MCF 10A (cell line): ENCODE measurements at regions of chr1 and their contacts with region 1.

Region 1: GRCh38 chr1:245045087-245045881 is 109.5 kb upstream of the KIF26B start:
- DNase-seq: peak; percentile 31
- H3K4me3 Mint-ChIP-seq: no peak overlapping the region
- H3K27ac Mint-ChIP-seq: no peak overlapping the region
- H3K4me1 Mint-ChIP-seq: peaks cover 17% of the 10 kb centered on the region
- H3K27me3 Mint-ChIP-seq: no peaks in the 10 kb centered on the region
- CTCF ChIP-seq: no peak

Region 2: DNA sequence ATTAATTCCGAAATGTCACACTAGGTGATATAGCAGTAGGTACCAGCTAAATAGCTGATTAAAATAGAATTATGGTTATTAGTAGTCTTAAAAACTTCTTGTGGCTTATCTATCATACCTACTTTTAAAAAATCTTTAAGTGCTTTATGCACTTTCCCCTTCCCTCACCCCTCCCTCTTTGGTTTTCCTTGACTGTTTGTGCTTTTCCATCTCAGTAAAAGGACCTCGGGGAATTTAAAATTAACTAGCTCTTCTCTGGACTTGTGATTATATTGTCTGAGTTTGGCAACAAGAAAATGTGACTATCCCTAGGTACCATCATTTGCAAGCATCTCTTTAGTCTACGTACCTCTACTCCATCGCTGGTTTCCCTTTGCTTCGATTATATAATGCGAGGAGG is 198.6 kb before region 1 on chr1:
- CTCF ChIA-PET with region 1: interaction called, 40 read pairs
- POLR2A ChIA-PET with region 1: interaction called, 9 read pairs
- intact Hi-C with region 1: no loop called
- DNase-seq: no peak
- H3K4me3 Mint-ChIP-seq: no peak overlapping the region
- H3K27ac Mint-ChIP-seq: no peak overlapping the region
- H3K4me1 Mint-ChIP-seq: no peaks in the 10 kb centered on the region
- H3K27me3 Mint-ChIP-seq: no peaks in the 10 kb centered on the region
- CTCF ChIP-seq: no peak

Region 3: GRCh38 chr1:244874974-244875579 is 170.2 kb before region 1 on chr1:
- CTCF ChIA-PET with region 1: interaction called, 17 read pairs
- POLR2A ChIA-PET with region 1: no interaction called
- intact Hi-C with region 1: no loop called
- DNase-seq: no peak
- H3K4me3 Mint-ChIP-seq: no peak overlapping the region
- H3K27ac Mint-ChIP-seq: no peak overlapping the region
- H3K4me1 Mint-ChIP-seq: peaks cover 9% of the 10 kb centered on the region
- H3K27me3 Mint-ChIP-seq: no peaks in the 10 kb centered on the region
- CTCF ChIP-seq: no peak

Region 4: DNA sequence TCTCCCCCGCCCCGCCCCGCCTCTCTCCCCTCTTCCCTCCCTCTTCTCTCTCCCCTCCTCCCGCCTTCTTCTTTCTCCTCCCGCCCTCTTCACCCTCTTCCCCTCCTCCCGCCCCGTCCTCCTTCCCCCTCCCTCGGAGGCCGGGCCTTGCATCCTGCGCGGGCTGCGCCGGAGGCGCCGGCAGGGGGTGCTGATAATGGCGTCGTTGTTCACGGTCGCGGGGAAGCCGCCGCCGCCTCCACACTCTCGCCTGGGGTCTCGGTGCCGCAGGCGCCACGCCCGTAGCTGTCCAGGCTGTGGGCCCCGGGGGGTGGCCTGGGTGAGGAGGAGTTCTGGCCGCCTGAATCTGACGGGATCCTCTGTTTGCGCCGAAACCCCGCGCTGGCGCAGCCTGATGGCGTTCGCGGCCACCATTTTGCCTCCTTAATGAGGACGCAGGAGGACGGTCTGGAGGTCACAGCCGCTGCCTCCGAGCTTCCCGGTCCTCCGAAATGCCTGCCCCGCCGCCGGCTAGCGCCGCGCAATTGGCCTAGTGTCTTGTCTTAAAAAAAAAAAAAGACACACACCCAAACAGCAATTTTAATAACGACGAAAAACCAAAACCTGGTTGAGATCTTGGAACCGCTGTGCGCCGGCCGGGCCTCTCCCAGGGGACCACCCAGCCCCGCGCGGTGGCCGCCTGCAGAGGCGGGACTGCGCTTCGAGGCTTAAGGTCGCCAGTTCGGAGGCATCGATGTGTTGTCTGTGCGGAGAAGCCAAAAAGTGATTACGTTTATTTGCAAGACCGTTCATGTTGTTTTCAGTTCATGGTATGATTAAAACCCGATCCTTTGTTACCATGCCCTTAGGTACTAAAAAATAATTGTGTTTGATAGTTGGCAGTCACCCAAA is 74.4 kb before region 1 on chr1:
- CTCF ChIA-PET with region 1: interaction called, 35 read pairs
- POLR2A ChIA-PET with region 1: interaction called, 33 read pairs
- intact Hi-C with region 1: loop called (anchors 1 kb)
- DNase-seq: peak; percentile 100
- H3K4me3 Mint-ChIP-seq: peak overlapping the region; percentile 98
- H3K27ac Mint-ChIP-seq: peak overlapping the region; percentile 100
- H3K4me1 Mint-ChIP-seq: peaks cover 29% of the 10 kb centered on the region
- H3K27me3 Mint-ChIP-seq: no peaks in the 10 kb centered on the region
- CTCF ChIP-seq: peak; percentile 85

Region 5: DNA sequence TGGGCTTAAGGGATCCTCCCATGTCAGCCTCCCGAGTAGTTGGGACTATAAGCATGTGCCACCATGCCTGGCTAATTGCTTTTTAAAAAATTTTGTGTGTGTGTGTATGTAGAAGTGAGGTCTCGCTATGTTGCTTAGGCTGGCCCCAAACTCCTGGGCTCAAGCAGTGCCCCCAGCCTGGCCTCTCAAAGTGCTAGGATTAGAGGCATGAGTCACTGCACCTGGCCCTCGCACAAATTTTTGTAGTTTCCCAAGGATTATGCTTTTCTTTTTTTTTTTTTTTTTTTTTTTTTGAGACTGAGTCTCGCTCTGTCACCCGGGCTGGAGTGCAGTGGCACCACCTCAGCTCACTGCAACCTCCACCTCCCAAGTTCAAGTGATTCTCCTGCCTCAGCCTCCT is 36.5 kb before region 1 on chr1:
- CTCF ChIA-PET with region 1: interaction called, 10 read pairs
- POLR2A ChIA-PET with region 1: no interaction called
- intact Hi-C with region 1: no loop called
- DNase-seq: peak; percentile 64
- H3K4me3 Mint-ChIP-seq: no peak overlapping the region
- H3K27ac Mint-ChIP-seq: no peak overlapping the region
- H3K4me1 Mint-ChIP-seq: no peaks in the 10 kb centered on the region
- H3K27me3 Mint-ChIP-seq: no peaks in the 10 kb centered on the region
- CTCF ChIP-seq: no peak

Region 6: DNA sequence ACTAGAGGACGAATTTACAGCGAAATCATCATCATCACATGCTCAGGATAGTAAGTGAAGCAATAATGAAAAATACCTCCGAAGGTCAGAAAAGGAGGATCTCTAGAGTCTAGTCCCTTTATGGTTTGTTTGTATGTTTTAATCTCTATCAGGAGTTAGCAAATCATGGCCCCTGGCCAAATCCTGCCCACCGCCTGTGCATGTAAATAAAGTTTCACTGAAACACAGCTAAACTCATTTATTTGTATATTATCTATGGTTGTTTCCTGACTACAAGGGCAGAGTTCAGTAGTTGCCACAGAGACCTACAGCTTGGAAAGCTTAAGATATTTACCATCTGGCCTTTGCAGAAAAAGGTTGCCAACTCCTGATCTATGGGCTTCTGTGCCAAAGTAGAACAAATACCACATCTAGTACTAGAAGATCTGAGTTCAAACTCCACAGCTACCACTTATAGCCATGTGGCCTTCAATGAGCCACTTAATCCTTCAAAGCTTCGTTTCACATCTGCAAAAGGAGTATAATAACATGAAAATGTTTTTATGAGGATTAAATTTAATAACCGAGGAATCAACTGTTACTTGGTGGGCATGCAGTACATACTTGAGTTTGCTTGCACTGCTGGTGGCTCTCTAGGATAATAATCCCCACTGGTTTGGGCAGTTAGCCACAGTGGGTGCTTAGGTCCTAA is 15.5 kb after region 1 on chr1:
- CTCF ChIA-PET with region 1: interaction called, 49 read pairs
- POLR2A ChIA-PET with region 1: interaction called, 5 read pairs
- intact Hi-C with region 1: no loop called
- DNase-seq: no peak
- H3K4me3 Mint-ChIP-seq: no peak overlapping the region
- H3K27ac Mint-ChIP-seq: no peak overlapping the region
- H3K4me1 Mint-ChIP-seq: no peaks in the 10 kb centered on the region
- H3K27me3 Mint-ChIP-seq: no peaks in the 10 kb centered on the region
- CTCF ChIP-seq: no peak

Region 7: DNA sequence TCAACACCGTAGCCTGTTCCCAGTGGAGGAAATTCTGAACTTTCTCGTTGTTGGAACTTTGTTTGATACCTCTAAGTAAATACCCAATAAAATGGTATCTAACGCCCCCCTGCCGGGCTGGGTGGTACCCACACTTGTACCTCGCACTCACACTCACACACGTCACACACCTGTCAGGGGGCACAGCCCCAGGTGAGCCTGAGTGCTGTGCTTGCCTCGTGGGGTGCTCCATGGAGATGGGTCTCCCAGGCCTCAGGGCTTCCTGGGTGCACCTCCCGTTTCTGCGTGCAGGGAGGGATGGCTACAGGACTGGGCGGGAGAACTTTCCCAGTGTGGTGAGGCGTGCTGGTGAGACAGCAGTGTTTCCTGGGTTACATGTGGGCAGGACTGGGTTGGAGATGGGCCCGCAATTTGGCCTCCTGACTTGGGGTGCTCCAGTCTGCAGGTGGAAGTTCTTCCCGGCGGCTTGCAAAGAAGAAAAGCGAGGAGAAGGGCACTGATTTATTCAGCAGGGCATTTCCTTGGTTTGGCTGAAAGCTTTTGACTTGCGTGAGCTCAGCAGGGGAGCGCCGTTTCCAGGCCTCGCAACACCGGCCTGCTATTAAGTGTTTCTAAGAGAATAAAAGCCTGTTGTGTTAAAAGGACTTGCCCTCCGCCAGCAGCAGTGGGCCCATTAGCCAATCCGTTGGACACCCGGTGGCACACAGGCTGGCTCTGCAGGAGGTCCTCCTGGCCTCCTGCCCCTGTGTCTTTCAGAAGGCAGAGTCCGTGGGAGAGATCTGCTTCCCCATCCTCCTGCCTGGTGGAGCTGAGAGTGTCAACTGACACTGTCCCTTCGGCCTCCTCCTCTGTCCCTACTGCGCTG is 189.2 kb after region 1 on chr1:
- CTCF ChIA-PET with region 1: no interaction called
- POLR2A ChIA-PET with region 1: no interaction called
- intact Hi-C with region 1: no loop called
- DNase-seq: no peak
- H3K4me3 Mint-ChIP-seq: no peak overlapping the region
- H3K27ac Mint-ChIP-seq: no peak overlapping the region
- H3K4me1 Mint-ChIP-seq: peaks cover 6% of the 10 kb centered on the region
- H3K27me3 Mint-ChIP-seq: peaks cover 23% of the 10 kb centered on the region
- CTCF ChIP-seq: no peak

Region 8: GRCh38 chr1:245310571-245311531 is 265.6 kb after region 1 on chr1:
- CTCF ChIA-PET with region 1: no interaction called
- POLR2A ChIA-PET with region 1: no interaction called
- intact Hi-C with region 1: no loop called
- DNase-seq: no peak
- H3K4me3 Mint-ChIP-seq: no peak overlapping the region
- H3K27ac Mint-ChIP-seq: no peak overlapping the region
- H3K4me1 Mint-ChIP-seq: no peaks in the 10 kb centered on the region
- H3K27me3 Mint-ChIP-seq: no peaks in the 10 kb centered on the region
- CTCF ChIP-seq: no peak